ENCODE measurements at regions of chr6 and their contacts with region 1.

Region 1: DNA sequence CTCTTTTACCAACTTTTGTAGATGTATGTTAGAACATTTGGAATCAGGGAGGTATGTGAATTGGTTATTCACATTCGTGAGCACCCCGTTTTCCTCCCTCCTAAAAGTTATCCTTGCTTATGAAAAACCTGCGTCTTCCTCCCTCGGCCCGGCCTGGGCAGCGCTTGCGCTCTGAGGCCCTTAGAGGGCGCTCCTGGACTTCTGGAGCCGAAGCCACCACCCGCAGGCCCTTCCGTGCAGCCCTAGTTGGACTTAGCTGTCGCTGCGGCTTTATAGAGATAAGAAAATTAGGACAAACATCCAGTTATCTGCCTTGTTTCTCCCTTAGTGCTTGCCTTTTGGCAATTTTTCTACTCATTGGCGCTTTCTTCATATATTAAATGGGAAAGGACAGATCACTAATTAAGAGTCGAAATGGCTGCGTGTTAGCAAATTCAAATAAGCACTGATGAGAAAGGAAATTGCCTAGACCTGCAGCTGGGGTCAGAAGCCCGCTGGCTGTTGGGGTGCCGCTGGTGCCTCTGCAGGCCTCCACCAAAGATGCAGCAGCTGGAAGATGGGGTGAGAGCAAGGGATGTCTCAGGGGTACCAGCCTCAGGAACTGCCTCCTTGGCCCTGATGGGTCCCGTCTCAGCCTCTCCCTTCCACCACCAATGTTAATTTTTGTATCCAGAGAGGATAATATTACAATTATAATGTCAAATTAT is 5.2 kb downstream of the FNDC1 start:
- DNase-seq: peak; percentile 79 to 82
- H3K4me3 ChIP-seq: no peak overlapping the region
- H3K27ac ChIP-seq: no peak overlapping the region
- H3K4me1 ChIP-seq: peaks cover 19 to 25% of the 10 kb centered on the region in 2 donors
- H3K27me3 ChIP-seq: no peaks in the 10 kb centered on the region
- CTCF ChIP-seq: peak; percentile 79 to 98 (median 91)
- POLR2A ChIP-seq: no peak

Region 2: GRCh38 chr6:158894193-158894592 is 280.2 kb before region 1 on chr6:
- intact Hi-C with region 1: no loop called
- DNase-seq: no peak
- H3K4me3 ChIP-seq: no peak overlapping the region
- H3K27ac ChIP-seq: no peak overlapping the region
- H3K4me1 ChIP-seq: no peaks in the 10 kb centered on the region
- H3K27me3 ChIP-seq: no peaks in the 10 kb centered on the region
- CTCF ChIP-seq: no peak
- POLR2A ChIP-seq: no peak

Region 3: GRCh38 chr6:159252955-159253508 is 78.6 kb after region 1 on chr6:
- intact Hi-C with region 1: no loop called
- DNase-seq: peak; percentile 11 to 36
- H3K4me3 ChIP-seq: no peak overlapping the region
- H3K27ac ChIP-seq: no peak overlapping the region
- H3K4me1 ChIP-seq: peaks cover 18 to 19% of the 10 kb centered on the region in 2 donors
- H3K27me3 ChIP-seq: no peaks in the 10 kb centered on the region
- CTCF ChIP-seq: peak; percentile 19 to 67 (median 44)
- POLR2A ChIP-seq: no peak

Region 4: DNA sequence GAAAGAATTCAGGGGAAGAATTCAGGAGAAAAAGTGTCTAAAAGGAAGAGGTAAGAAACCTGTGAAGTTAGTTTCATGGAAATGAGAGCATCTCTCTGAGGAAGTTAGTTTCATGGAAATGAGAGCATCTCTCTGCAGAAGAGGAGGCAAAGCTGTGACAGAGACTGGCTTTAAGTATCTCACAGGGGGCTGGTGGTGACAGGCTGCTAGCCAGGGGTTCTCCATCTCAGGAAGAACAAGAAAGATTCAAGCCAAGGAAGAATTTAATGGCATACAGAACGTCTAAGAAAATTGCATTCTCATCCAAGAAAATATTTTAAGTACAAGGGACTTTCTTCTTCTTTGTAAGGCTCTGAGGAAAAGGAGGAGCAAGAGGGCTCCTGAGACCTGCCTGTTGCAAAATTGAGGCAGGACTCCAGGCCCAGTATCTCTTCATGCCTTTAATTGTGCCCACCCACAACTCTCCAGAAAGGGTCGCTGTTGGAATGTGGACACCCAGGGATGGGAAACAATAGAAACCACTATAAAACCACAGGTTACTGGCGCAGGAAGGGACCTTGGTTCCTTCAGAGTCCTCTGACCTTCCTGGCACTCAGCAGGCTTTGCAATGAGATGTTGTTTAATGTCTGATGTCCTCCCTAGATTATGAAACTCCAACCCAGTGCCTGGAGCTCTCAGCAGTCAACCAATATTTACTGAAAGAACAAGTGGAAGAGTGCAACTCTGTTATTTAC is 131.6 kb after region 1 on chr6:
- intact Hi-C with region 1: loop called (anchors 10 kb)
- DNase-seq: no peak
- H3K4me3 ChIP-seq: no peak overlapping the region
- H3K27ac ChIP-seq: no peak overlapping the region
- H3K4me1 ChIP-seq: no peaks in the 10 kb centered on the region
- H3K27me3 ChIP-seq: no peaks in the 10 kb centered on the region
- CTCF ChIP-seq: no peak
- POLR2A ChIP-seq: no peak

Region 5: DNA sequence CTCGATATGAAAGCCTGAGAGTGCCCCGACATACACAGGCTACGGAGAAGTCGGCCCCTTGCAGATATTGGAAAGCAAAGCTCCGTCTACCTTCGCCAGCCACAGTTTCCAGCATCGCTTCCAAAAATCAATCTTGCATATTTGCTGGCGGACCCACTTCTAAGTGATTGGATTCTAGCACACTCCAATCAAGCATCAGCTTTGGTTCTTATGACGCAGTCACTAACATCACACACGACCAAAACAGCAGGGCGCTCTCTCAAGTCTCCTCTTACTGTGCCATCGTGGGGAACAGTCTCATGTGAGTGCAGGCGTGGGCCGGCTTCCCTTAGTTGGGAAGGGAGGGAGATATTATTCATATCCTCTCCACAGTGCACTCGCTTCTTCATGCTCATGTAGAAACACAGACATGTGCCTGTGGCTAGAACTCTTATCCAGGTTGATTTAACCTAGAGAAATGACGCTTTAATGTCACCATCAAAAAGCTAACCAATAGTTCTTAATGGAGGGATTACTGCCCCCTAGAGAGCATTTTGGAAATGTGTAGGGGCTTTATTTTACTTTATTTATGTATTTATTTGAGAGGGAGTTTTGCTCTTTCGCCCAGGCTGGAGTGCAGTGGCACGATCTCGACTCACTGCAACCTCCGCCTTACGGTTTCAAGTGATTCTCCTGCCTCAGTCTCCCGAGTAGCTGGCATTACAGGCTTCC is 288.9 kb after region 1 on chr6:
- intact Hi-C with region 1: loop called (anchors 10 kb)
- DNase-seq: no peak
- H3K4me3 ChIP-seq: no peak overlapping the region
- H3K27ac ChIP-seq: no peak overlapping the region
- H3K4me1 ChIP-seq: peaks cover 5% of the 10 kb centered on the region in 2 donors
- H3K27me3 ChIP-seq: no peaks in the 10 kb centered on the region
- CTCF ChIP-seq: peak in 4 of 6 experiments; percentile 22 to 55 (median 48)
- POLR2A ChIP-seq: no peak

Region 6: DNA sequence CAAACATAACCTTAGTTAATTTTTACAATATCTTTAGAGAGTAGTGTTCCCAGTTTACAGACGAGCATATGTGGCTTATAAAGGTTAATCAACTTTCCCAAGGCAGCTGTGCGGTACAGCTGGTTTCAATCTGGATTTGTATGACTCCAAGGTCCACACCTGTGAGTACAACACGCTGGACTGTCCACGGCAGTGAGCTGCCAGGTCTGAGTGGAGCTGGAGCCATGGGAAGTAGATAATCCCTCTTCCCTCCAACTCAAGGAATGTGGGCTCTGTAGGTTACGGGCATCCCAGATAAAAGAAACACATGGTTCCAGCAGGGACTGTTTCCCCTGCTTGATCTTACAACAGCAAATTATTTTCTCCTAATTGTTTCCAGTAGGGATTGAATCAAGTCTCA is 416.4 kb after region 1 on chr6:
- intact Hi-C with region 1: no loop called
- DNase-seq: no peak
- H3K4me3 ChIP-seq: no peak overlapping the region
- H3K27ac ChIP-seq: no peak overlapping the region
- H3K4me1 ChIP-seq: peaks cover 0 to 3% of the 10 kb centered on the region in 2 donors
- H3K27me3 ChIP-seq: no peaks in the 10 kb centered on the region
- CTCF ChIP-seq: no peak
- POLR2A ChIP-seq: no peak

Measured in thyroid gland (tissue), 4 donors.